ENCODE measurements at regions of chr13 and their contacts with region 1.

Region 1: GRCh38 chr13:23558675-23559536 is 11.3 kb upstream of the TNFRSF19 start:
- DNase-seq: peak; percentile 66
- H3K4me3 ChIP-seq: peak overlapping the region in 1 of 2 donors; percentile 9
- H3K27ac ChIP-seq: peak overlapping the region; percentile 40 to 46
- H3K4me1 ChIP-seq: no peaks in the 10 kb centered on the region
- H3K27me3 ChIP-seq: no peaks in the 10 kb centered on the region
- CTCF ChIP-seq: no peak
- POLR2A ChIP-seq: no peak

Region 2: GRCh38 chr13:22428188-22428828 is 1130.6 kb before region 1 on chr13:
- intact Hi-C with region 1: no loop called
- DNase-seq: no peak
- H3K4me3 ChIP-seq: no peak overlapping the region
- H3K27ac ChIP-seq: no peak overlapping the region
- H3K4me1 ChIP-seq: no peaks in the 10 kb centered on the region
- H3K27me3 ChIP-seq: no peaks in the 10 kb centered on the region
- CTCF ChIP-seq: no peak
- POLR2A ChIP-seq: no peak

Region 3: DNA sequence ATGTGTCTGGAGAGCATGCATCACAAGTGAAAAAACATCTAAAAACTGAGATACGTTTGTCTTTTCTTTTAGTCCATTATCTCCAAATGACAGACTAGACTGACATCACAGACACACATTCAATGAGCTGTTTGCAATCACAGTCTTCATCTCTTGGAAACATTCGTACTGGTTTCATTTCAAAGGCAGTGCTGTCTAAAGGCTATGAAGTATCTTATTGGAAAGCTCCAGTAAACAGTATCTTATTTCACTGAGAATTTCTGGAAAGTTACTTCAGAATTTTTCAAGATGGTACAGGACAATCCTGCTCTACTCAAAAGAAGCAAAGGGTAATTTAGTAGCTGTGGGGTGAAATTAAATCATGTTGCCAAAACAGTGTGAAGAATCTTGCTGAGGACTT is 42.2 kb before region 1 on chr13:
- intact Hi-C with region 1: loop called (anchors 5 kb)
- DNase-seq: no peak
- H3K4me3 ChIP-seq: no peak overlapping the region
- H3K27ac ChIP-seq: no peak overlapping the region
- H3K4me1 ChIP-seq: no peaks in the 10 kb centered on the region
- H3K27me3 ChIP-seq: no peaks in the 10 kb centered on the region
- CTCF ChIP-seq: no peak
- POLR2A ChIP-seq: no peak

Measured in prostate gland (tissue), 2 donors.